A549 (cell line): ENCODE measurements at regions of chr17 and their contacts with region 1.

Region 1: GRCh38 chr17:28494445-28495188 is 11.5 kb upstream of the FOXN1 start:
- DNase-seq: peak; percentile 67 to 96
- ATAC-seq: peak; percentile 79 to 93
- H3K4me3 ChIP-seq: no peak overlapping the region
- H3K27ac ChIP-seq: no peak overlapping the region
- H3K4me1 ChIP-seq: 0 out of 3 replicates have a peak, but pooled peaks cover 5% of the 10 kb centered on the region
- CTCF ChIP-seq: peak; percentile 97
- EP300 ChIP-seq: no peak
- POLR2A ChIP-seq: no peak
- RAD21 ChIP-seq: peak; percentile 97 to 98

Region 2: GRCh38 chr17:28384281-28385036 is 110.2 kb before region 1 on chr17:
- CTCF ChIA-PET with region 1: no interaction called
- POLR2A ChIA-PET with region 1: no interaction called
- DNase-seq: no peak
- ATAC-seq: no peak
- H3K4me3 ChIP-seq: no peak overlapping the region
- H3K27ac ChIP-seq: no peak overlapping the region
- H3K4me1 ChIP-seq: peaks cover 18% of the 10 kb centered on the region
- CTCF ChIP-seq: no peak
- EP300 ChIP-seq: no peak
- POLR2A ChIP-seq: no peak
- RAD21 ChIP-seq: no peak

Region 3: DNA sequence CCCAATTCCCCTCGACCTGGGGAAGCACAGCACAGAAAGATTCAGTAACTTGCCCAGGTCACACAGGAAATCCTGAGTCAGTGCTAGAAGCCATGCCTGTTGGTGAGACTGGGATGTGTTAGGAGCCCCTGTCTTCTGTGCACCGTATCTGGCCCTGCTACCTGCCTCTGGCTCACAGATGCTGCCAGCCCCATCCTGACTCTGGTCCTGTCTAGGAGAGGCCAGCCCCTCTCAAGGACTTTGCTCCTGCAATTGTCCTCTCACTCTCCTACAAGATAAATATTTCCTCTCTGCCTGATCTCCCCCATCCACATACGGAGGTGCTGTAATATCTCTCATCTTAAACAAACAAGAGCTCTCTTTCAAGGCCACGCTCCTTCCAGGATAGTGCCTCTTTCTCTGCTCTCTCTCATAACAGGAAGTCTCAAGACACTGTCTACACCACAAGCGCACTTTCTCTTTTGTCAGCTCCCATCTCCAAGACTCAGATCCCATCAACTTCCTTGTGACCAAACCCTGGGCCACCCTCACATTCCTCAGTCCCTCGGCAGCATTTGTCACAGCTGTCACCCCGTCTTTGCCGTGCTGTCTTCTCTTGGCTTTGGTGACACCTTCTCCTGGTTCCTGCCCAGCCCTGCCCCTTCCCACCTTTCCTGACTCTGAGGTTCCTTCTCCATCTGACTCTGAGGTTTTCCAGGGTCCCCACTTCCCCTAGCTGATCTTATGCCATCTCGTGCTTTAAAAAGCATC is 19.3 kb before region 1 on chr17:
- CTCF ChIA-PET with region 1: interaction called, 47 read pairs
- POLR2A ChIA-PET with region 1: no interaction called
- DNase-seq: peak in 1 of 2 experiments; percentile 63
- ATAC-seq: peak; percentile 28 to 68; a peak in 4 of 6 replicates
- H3K4me3 ChIP-seq: no peak overlapping the region
- H3K27ac ChIP-seq: peak overlapping the region in 1 of 2 experiments; percentile 59; a peak in 3 of 6 replicates
- H3K4me1 ChIP-seq: peaks cover 22% of the 10 kb centered on the region
- CTCF ChIP-seq: no peak
- EP300 ChIP-seq: no peak
- POLR2A ChIP-seq: no peak
- RAD21 ChIP-seq: no peak

Region 4: GRCh38 chr17:28509789-28510188 is 15.2 kb after region 1 on chr17:
- CTCF ChIA-PET with region 1: interaction called, 153 read pairs
- POLR2A ChIA-PET with region 1: no interaction called
- DNase-seq: no peak
- ATAC-seq: no peak
- H3K4me3 ChIP-seq: no peak overlapping the region
- H3K27ac ChIP-seq: no peak overlapping the region
- H3K4me1 ChIP-seq: no peaks in the 10 kb centered on the region
- CTCF ChIP-seq: no peak
- EP300 ChIP-seq: no peak
- POLR2A ChIP-seq: no peak
- RAD21 ChIP-seq: no peak

Region 5: GRCh38 chr17:28532991-28533807 is 38.6 kb after region 1 on chr17:
- CTCF ChIA-PET with region 1: interaction called, 317 read pairs
- POLR2A ChIA-PET with region 1: no interaction called
- DNase-seq: no peak
- ATAC-seq: no peak
- H3K4me3 ChIP-seq: no peak overlapping the region
- H3K27ac ChIP-seq: no peak overlapping the region
- H3K4me1 ChIP-seq: peaks cover 11% of the 10 kb centered on the region
- CTCF ChIP-seq: no peak
- EP300 ChIP-seq: no peak
- POLR2A ChIP-seq: no peak
- RAD21 ChIP-seq: no peak

Region 6: GRCh38 chr17:28571255-28572122 is 76.9 kb after region 1 on chr17 and contains the start of gene PIGS:
- CTCF ChIA-PET with region 1: interaction called, 12 read pairs
- POLR2A ChIA-PET with region 1: no interaction called
- DNase-seq: peak; percentile 92 to 100
- ATAC-seq: peak; percentile 93 to 99
- H3K4me3 ChIP-seq: peak within 1 kb of the TSS; percentile 92
- H3K27ac ChIP-seq: peak within 1 kb of the TSS; percentile 87 to 91
- H3K4me1 ChIP-seq: peaks cover 26% of the 10 kb centered on the region
- CTCF ChIP-seq: no peak
- EP300 ChIP-seq: no peak
- POLR2A ChIP-seq: peak; percentile 84
- RAD21 ChIP-seq: no peak
- polyA plus RNA-seq, gene PIGS: 50.0 and 53.2 TPM in 2 replicates

Region 7: DNA sequence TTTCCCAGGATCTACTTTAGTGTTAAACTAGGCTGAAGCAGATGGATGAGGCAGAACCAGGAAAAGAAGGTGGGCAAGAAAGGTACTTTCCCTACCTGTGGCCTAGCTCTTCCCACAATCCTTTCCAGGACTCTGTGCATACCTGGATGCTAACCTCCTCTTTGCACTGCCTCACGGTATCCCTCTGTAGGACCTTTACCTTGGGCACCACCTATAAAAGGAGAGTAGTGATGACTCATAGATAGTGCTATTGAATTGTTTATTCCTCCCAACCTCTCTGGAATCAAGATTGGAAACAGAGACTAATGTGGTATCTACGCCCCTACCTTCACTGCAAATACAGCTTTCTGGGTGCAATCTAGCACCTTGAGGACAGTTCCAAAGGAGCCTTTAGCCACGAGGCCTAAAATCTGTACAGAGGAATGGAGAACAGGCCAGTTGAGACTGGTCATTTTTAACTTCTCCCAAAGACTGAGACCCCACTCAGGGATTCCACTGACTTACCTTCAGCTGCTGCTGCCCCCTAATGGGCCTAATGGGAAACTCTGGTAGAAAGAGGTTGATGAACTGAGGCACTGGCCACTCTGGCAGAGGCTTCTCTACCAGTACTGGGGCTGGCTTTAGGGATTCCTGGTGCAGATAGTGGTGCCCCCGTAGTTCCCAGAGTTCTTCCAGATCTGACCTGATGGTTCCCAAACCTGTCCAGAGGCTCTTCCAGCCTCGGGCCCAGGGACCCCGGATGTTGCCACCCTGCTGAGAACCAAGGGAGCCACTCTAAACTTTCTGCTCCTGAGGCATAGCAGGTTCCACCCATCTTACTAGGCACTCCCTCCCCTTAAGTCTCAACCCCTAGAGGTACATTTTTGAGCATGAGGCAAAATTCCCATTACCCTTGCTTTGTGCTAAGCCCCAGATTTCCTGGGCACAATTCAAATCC is 118.6 kb after region 1 on chr17:
- CTCF ChIA-PET with region 1: interaction called, 11 read pairs
- POLR2A ChIA-PET with region 1: no interaction called
- DNase-seq: peak; percentile 39 to 56
- ATAC-seq: peak; percentile 56 to 79; a peak in 3 of 6 replicates
- H3K4me3 ChIP-seq: no peak overlapping the region
- H3K27ac ChIP-seq: no peak overlapping the region
- H3K4me1 ChIP-seq: no peaks in the 10 kb centered on the region
- CTCF ChIP-seq: peak; percentile 67
- EP300 ChIP-seq: no peak
- POLR2A ChIP-seq: no peak
- RAD21 ChIP-seq: peak; percentile 47 to 58; a peak in 4 of 5 replicates